ENCODE measurements at regions of chr4 and their contacts with region 1.

Region 1: GRCh38 chr4:110003401-110004187 is 90.9 kb downstream of the EGF start:
- DNase-seq: no peak
- ATAC-seq: no peak

Region 2: GRCh38 chr4:109815151-109816081 is 188.2 kb before region 1 on chr4 and contains the start of gene GAR1:
- intact Hi-C with region 1: no loop called
- DNase-seq: peak; percentile 90
- ATAC-seq: peak; percentile 99
- total RNA-seq, gene GAR1: 15.4 TPM

Region 3: DNA sequence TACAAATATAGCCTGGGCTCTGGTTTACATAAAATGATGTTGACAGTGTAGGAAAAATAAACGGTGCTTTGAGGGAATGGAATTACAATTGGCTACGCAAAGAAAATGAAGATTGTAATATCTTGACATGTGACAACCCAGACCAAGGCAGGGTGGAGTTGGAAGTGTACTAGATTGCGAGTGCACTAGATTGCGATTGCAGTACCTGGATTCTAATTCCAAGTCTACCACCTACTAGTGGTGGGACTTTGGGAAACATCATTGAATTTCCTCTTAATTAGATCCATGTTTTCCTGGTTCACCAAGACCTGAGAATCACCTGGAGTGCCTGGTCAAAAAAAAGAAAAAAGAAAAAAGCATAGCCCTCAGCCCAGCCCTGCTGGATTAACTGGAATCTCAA is 72.3 kb before region 1 on chr4:
- intact Hi-C with region 1: no loop called
- DNase-seq: no peak
- ATAC-seq: no peak

Region 4: DNA sequence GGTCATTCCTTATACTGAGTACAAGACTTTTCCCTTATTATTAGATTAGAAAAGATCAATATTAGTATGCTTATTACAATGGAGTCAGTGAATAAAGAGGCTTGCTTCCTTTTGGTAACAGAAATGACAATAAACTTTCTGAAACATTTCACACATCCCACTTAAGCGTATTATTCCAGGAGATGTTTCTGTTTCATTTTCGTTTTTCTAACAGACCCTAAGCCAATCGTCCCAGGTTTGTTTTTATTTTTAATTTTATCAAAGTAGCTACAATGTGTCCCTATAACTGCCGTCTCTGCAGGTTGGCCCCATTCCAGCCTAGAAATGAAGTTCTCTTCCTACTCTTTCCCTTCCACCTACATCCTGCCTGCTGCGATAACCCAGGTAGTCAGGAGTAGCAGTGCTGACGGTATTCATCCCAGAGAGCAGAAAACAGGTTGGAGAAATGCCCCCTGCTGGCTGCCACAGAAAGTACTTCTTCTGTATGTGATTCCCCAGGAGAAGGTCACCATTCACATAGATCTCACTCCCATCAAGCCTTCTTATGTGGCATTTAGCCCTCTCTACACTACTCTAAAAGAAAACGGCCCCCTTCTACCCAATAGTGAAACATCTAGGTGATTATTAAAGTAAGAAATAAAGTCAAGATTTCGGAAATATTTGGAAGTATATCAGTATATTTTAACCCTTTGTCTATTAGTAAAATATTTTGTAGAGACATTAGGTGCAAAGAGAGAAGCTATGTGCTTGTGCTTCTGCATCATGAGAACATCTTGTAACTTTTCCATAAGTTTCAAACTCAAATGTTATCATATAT is 512.7 kb after region 1 on chr4:
- intact Hi-C with region 1: loop called (anchors 2 kb)
- DNase-seq: peak; percentile 61
- ATAC-seq: peak; percentile 59